Naive thymus-derived CD4-positive, alpha-beta T cell (primary cell): ENCODE measurements at regions of chr9 and their contacts with region 1.

Region 1: GRCh38 chr9:113578882-113579282 is 115.4 kb downstream of the RGS3 start:
- DNase-seq: peak; percentile 39 to 86 (median 66)
- ATAC-seq: peak; percentile 75
- H3K4me3 ChIP-seq: peak overlapping the region; percentile 37
- H3K4me3 Mint-ChIP-seq: peak overlapping the region; percentile 70 to 95 (median 82)
- H3K27ac ChIP-seq: peak overlapping the region; percentile 77
- H3K27ac Mint-ChIP-seq: peak overlapping the region; percentile 92 to 98 (median 96)
- H3K4me1 ChIP-seq: peaks cover 49 to 50% of the 10 kb centered on the region in 2 donors
- H3K4me1 Mint-ChIP-seq: peaks cover 53 to 85% (median 75%) of the 10 kb centered on the region in 7 donors
- H3K27me3 ChIP-seq: no peaks in the 10 kb centered on the region
- H3K27me3 Mint-ChIP-seq: no peaks in the 10 kb centered on the region

Region 2: DNA sequence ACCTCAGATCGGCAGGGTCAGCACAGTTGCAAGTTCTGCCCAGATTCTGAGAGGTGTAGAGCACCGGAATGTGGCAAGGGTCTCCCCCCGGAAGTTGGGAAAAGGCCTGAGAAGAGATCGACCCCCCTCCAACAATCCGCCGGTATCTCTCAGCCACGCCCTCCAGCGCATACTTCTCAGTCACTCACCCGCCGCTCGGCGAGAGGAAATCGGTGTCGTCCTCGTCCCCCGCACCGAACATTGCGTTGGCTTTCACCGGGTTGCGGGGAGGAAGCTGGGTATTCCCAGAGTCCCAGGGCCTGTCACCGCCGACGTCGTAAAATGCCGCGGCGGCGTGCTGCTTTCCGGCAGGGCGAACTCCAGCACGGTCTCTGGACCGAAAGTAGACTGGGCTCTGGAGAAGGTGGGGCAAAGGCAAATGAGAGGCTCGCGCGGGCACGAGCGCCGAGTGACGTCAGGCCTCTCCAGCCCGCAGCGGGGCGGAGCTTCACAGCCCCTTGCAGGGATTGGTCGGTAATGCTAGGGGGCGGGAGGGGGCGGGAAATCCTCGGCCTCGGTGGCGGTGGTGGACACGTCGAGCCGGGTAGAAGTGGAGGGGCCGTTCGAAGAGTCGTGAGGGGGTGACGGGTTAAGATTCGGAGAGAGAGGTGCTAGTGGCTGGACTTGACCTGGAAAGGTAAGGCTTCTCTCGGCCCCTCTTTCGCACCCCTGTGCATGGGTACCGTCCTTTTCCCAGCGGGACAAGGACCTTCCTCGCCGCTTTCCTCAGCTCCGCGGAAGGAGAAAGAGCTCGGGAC is 357.7 kb before region 1 on chr9 and contains the starts of genes FKBP15 and SLC31A1:
- CTCF ChIA-PET with region 1: no interaction called
- POLR2A ChIA-PET with region 1: no interaction called
- intact Hi-C with region 1: loop called (anchors 5 kb)
- DNase-seq: peak; percentile 88 to 96 (median 96)
- ATAC-seq: peak; percentile 99
- H3K4me3 ChIP-seq: peak within 1 kb of the TSS; percentile 91
- H3K4me3 Mint-ChIP-seq: peak within 1 kb of the TSS; percentile 89 to 99 (median 94)
- H3K27ac ChIP-seq: peak within 1 kb of the TSS; percentile 94
- H3K27ac Mint-ChIP-seq: peak within 1 kb of the TSS; percentile 86 to 98 (median 94)
- H3K4me1 ChIP-seq: peaks cover 10 to 25% of the 10 kb centered on the region in 2 donors
- H3K4me1 Mint-ChIP-seq: peaks cover 15 to 58% (median 48%) of the 10 kb centered on the region in 7 donors
- H3K27me3 ChIP-seq: no peaks in the 10 kb centered on the region
- H3K27me3 Mint-ChIP-seq: no peaks in the 10 kb centered on the region
- total RNA-seq, gene FKBP15: 22.4 to 50.6 (median 33.4) TPM
- total RNA-seq, gene SLC31A1: 4.5 to 10.4 (median 4.7) TPM

Region 3: GRCh38 chr9:113376634-113377567 is 202.0 kb before region 1 on chr9 and contains the start of gene HDHD3:
- CTCF ChIA-PET with region 1: no interaction called
- POLR2A ChIA-PET with region 1: no interaction called
- intact Hi-C with region 1: loop called (anchors 1 kb)
- DNase-seq: peak; percentile 70 to 84 (median 81)
- ATAC-seq: peak; percentile 96
- H3K4me3 ChIP-seq: peak within 1 kb of the TSS; percentile 81
- H3K4me3 Mint-ChIP-seq: peak within 1 kb of the TSS; percentile 82 to 98 (median 90)
- H3K27ac ChIP-seq: peak within 1 kb of the TSS; percentile 94
- H3K27ac Mint-ChIP-seq: peak within 1 kb of the TSS; percentile 68 to 97 (median 85)
- H3K4me1 ChIP-seq: peaks cover 0 to 7% of the 10 kb centered on the region in 2 donors
- H3K4me1 Mint-ChIP-seq: peaks cover 14 to 17% (median 16%) of the 10 kb centered on the region in 7 donors
- H3K27me3 ChIP-seq: no peaks in the 10 kb centered on the region
- H3K27me3 Mint-ChIP-seq: peaks cover 0 to 3% (median 0%) of the 10 kb centered on the region in 5 donors
- total RNA-seq, gene HDHD3: 11.3 to 32.2 (median 20.5) TPM

Region 4: DNA sequence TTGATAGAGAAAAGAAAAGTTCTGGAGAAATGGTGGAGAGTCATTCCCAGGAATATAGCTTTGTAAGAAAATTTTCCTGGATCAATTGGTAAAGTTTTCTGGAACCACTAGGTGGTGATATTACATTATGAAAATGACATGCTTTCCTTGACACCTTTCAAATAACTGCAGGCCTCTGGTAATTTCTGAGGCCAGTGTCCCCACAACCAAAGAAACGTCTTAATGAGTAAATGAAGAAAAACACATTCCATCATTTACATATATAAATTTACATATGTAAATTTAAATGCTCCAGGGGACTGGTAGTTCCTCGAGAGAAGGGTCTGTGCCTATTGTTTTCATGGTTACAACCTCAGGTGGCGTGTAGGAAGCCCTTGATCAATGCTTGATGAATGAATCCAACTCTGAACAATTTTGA is 132.6 kb before region 1 on chr9:
- CTCF ChIA-PET with region 1: interaction called, 35 read pairs
- POLR2A ChIA-PET with region 1: interaction called, 6 read pairs
- intact Hi-C with region 1: loop called in 1 of 2 experiments (anchors 2 kb)
- DNase-seq: peak in 6 of 9 donors; percentile 20 to 51 (median 42)
- ATAC-seq: no peak
- H3K4me3 ChIP-seq: no peak overlapping the region
- H3K4me3 Mint-ChIP-seq: no peak overlapping the region
- H3K27ac ChIP-seq: no peak overlapping the region
- H3K27ac Mint-ChIP-seq: no peak overlapping the region
- H3K4me1 ChIP-seq: no peaks in the 10 kb centered on the region
- H3K4me1 Mint-ChIP-seq: peaks cover 0 to 3% (median 0%) of the 10 kb centered on the region in 7 donors
- H3K27me3 ChIP-seq: no peaks in the 10 kb centered on the region
- H3K27me3 Mint-ChIP-seq: no peaks in the 10 kb centered on the region

Region 5: GRCh38 chr9:113523421-113524236 is 55.3 kb before region 1 on chr9:
- CTCF ChIA-PET with region 1: interaction called, 5 read pairs
- POLR2A ChIA-PET with region 1: interaction called, 21 read pairs
- intact Hi-C with region 1: loop called (anchors 1 to 2 kb)
- DNase-seq: peak in 2 of 9 donors; percentile 27 to 84
- ATAC-seq: peak; percentile 63
- H3K4me3 ChIP-seq: peak overlapping the region; percentile 53
- H3K4me3 Mint-ChIP-seq: peak overlapping the region; percentile 54 to 80 (median 70)
- H3K27ac ChIP-seq: peak overlapping the region; percentile 42
- H3K27ac Mint-ChIP-seq: peak overlapping the region; percentile 64 to 91 (median 79)
- H3K4me1 ChIP-seq: peaks cover 65 to 79% of the 10 kb centered on the region in 2 donors
- H3K4me1 Mint-ChIP-seq: peaks cover 61 to 87% (median 71%) of the 10 kb centered on the region in 7 donors
- H3K27me3 ChIP-seq: no peaks in the 10 kb centered on the region
- H3K27me3 Mint-ChIP-seq: no peaks in the 10 kb centered on the region

Region 6: DNA sequence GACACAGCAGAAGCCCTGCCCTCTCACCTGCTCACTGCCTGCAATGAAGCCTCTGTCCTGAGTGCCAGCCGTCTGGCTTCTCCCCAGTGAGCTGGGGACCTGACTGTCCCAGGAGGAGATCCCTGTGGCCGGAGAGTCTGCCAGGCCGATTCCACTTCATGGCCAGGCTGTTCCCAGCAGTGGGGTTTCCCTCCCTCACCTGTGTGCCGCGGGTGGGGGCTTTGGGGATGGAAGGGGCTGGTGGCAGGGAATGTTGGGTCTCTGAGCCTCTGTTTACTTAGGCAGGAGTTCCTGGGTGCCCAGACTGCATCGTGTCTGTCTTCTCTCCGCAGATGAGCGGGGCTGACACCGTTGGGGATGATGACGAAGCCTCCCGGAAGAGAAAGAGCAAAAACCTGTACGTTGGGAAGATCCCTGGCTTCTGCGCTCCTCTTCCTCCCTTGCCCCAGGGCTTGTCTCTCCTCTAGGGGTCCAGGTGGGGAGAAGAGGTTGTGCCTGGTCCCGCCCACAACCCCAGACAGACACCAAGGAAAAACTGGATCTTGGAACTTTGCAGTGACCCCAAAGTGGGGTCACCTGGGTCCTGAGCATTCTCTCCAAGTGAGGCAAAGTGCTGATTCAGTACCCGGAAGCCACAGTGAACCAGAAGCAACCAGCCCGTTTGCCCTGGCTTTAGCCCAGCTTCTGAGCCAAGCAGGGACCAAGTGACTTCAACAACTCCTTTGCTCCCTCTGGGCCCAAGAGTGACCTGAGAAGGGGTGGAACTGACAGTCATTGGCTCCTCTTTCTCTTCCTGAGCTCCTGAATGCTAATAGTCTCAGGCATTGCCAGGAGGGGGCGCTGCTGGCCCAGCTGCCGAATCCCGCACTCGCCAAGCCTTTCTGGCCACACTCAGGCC is 12.4 kb after region 1 on chr9:
- CTCF ChIA-PET with region 1: interaction called, 13 read pairs
- POLR2A ChIA-PET with region 1: interaction called, 8 read pairs
- intact Hi-C with region 1: loop called (anchors 1 kb)
- DNase-seq: peak in 6 of 9 donors; percentile 30 to 75 (median 38)
- ATAC-seq: peak; percentile 58
- H3K4me3 ChIP-seq: no peak overlapping the region
- H3K4me3 Mint-ChIP-seq: no peak overlapping the region
- H3K27ac ChIP-seq: no peak overlapping the region
- H3K27ac Mint-ChIP-seq: peak overlapping the region in 1 of 9 donors; percentile 45
- H3K4me1 ChIP-seq: peaks cover 5 to 8% of the 10 kb centered on the region in 2 donors
- H3K4me1 Mint-ChIP-seq: peaks cover 20 to 47% (median 23%) of the 10 kb centered on the region in 7 donors
- H3K27me3 ChIP-seq: no peaks in the 10 kb centered on the region
- H3K27me3 Mint-ChIP-seq: no peaks in the 10 kb centered on the region